BJ (cell line): ENCODE measurements at regions of chr2 and their contacts with region 1.

Region 1: GRCh38 chr2:219029829-219030165 is 11.5 kb downstream of the CFAP65 start:
- DNase-seq: no peak
- H3K4me3 ChIP-seq: no peak overlapping the region
- H3K27me3 ChIP-seq: peaks cover 22% of the 10 kb centered on the region
- CTCF ChIP-seq: peak; percentile 97

Region 2: GRCh38 chr2:218995972-218996711 is 33.7 kb before region 1 on chr2:
- CTCF ChIA-PET with region 1: interaction called, 12 read pairs
- POLR2A ChIA-PET with region 1: no interaction called
- DNase-seq: no peak
- H3K4me3 ChIP-seq: peak overlapping the region; percentile 40
- H3K27me3 ChIP-seq: peaks cover 69% of the 10 kb centered on the region
- CTCF ChIP-seq: peak; percentile 96

Region 3: DNA sequence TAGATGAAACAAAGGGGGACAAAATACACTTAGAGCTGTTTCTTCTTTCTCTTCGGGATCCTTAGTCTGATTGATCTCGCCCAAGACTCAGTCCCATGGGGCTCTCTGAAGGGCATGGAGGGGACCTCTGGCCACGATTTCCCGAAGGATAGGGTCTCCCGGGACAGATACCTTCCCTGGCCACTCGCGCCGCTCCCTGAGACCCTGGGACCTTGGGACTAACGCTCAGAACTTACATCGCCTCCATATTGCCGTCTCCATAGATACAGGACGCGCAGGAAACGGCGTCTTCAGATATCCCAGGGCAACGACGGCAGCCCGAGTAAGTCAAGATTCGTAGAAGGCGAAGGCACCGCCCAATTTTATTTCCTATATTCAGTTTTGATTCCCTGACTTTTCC is 11.5 kb after region 1 on chr2 and contains the start of gene CFAP65:
- CTCF ChIA-PET with region 1: interaction called, 15 read pairs
- POLR2A ChIA-PET with region 1: no interaction called
- DNase-seq: no peak
- H3K4me3 ChIP-seq: peak within 1 kb of the TSS; percentile 40
- H3K27me3 ChIP-seq: peaks cover 22% of the 10 kb centered on the region
- CTCF ChIP-seq: no peak
- polyA plus RNA-seq, gene CFAP65: not detected in 2 replicates

Region 4: GRCh38 chr2:219160186-219161017 is 130.6 kb after region 1 on chr2 and contains the start of gene NHEJ1:
- CTCF ChIA-PET with region 1: interaction called, 198 read pairs
- POLR2A ChIA-PET with region 1: no interaction called
- DNase-seq: peak; percentile 63
- H3K4me3 ChIP-seq: peak within 1 kb of the TSS; percentile 73
- H3K27me3 ChIP-seq: no peaks in the 10 kb centered on the region
- CTCF ChIP-seq: peak; percentile 99
- polyA plus RNA-seq, gene NHEJ1: 23.9 and 24.1 TPM in 2 replicates